B cell (primary cell): ENCODE measurements at regions of chr14 and their contacts with region 1.

Region 1: DNA sequence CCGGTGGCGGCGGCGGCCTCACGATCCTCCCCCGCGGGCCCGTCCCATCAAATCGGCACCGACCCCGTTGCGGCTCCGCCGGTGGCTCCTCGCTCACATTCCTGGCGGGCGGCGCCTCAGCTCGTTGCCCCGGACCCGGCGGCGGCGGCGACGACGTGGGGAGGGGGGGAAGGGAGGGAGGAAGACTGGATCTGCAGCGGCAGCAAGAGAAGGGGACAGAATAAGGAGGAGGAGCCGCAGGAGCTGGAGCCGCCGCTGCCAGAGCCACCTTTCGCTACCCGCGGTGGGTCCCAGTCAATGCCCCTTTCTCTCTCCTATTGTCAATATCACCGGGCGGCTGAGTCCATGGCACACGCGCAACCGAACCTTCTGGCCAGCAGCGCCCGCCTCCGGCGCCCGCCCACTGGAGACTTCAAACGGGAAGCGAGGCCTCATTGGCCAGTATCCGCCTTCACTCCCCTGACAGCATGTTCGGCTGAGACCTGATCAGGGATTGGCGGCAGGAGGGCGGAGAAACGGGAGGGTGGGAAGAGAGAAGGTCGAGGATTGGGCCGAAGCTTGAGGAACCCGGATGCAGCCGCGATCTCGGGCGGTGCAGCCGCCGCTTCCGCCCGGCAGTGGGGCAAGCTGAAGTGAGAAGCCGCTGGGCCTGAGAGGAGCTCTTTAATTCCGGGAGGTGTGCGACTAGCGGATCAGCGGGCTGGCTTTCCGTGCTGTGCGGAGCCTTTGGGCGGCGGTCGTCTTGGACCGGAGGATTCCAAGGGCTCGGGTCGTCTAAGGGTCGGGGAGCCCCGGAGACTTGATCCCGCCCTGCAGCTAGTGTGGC is at the start of gene PPP2R5E:
- DNase-seq: peak; percentile 98
- ATAC-seq: peak; percentile 96
- H3K4me3 ChIP-seq: peak within 1 kb of the TSS; percentile 63 to 98 (median 94)
- H3K4me3 Mint-ChIP-seq: peak within 1 kb of the TSS; percentile 90
- H3K27ac ChIP-seq: peak within 1 kb of the TSS; percentile 82 to 90
- H3K27ac Mint-ChIP-seq: peak within 1 kb of the TSS; percentile 91
- H3K4me1 ChIP-seq: peaks cover 12 to 21% of the 10 kb centered on the region in 2 donors
- H3K4me1 Mint-ChIP-seq: peaks cover 28% of the 10 kb centered on the region
- H3K27me3 ChIP-seq: no peaks in the 10 kb centered on the region
- H3K27me3 Mint-ChIP-seq: no peaks in the 10 kb centered on the region
- CTCF ChIP-seq: no peak
- total RNA-seq, gene PPP2R5E: 40.3 and 40.6 TPM in 2 replicates

Region 2: GRCh38 chr14:63465347-63465746 is 77.9 kb before region 1 on chr14:
- CTCF ChIA-PET with region 1: no interaction called
- POLR2A ChIA-PET with region 1: no interaction called
- intact Hi-C with region 1: no loop called
- DNase-seq: no peak
- ATAC-seq: no peak
- H3K4me3 ChIP-seq: no peak overlapping the region
- H3K4me3 Mint-ChIP-seq: no peak overlapping the region
- H3K27ac ChIP-seq: no peak overlapping the region
- H3K27ac Mint-ChIP-seq: no peak overlapping the region
- H3K4me1 ChIP-seq: no peaks in the 10 kb centered on the region
- H3K4me1 Mint-ChIP-seq: peaks cover 23% of the 10 kb centered on the region
- H3K27me3 ChIP-seq: no peaks in the 10 kb centered on the region
- H3K27me3 Mint-ChIP-seq: no peaks in the 10 kb centered on the region
- CTCF ChIP-seq: no peak

Region 3: GRCh38 chr14:63478010-63478409 is 65.2 kb before region 1 on chr14:
- CTCF ChIA-PET with region 1: interaction called, 3 read pairs
- POLR2A ChIA-PET with region 1: no interaction called
- intact Hi-C with region 1: loop called (anchors 1 kb)
- DNase-seq: peak; percentile 69
- ATAC-seq: peak; percentile 73
- H3K4me3 ChIP-seq: peak overlapping the region in 1 of 5 experiments; percentile 9
- H3K4me3 Mint-ChIP-seq: peak overlapping the region; percentile 31
- H3K27ac ChIP-seq: peak overlapping the region; percentile 50 to 61
- H3K27ac Mint-ChIP-seq: peak overlapping the region; percentile 15
- H3K4me1 ChIP-seq: peaks cover 12 to 15% of the 10 kb centered on the region in 2 donors
- H3K4me1 Mint-ChIP-seq: peaks cover 34% of the 10 kb centered on the region
- H3K27me3 ChIP-seq: no peaks in the 10 kb centered on the region
- H3K27me3 Mint-ChIP-seq: no peaks in the 10 kb centered on the region
- CTCF ChIP-seq: no peak

Region 4: GRCh38 chr14:63672417-63673180 is 129.4 kb after region 1 on chr14:
- CTCF ChIA-PET with region 1: no interaction called
- POLR2A ChIA-PET with region 1: no interaction called
- intact Hi-C with region 1: no loop called
- DNase-seq: no peak
- ATAC-seq: no peak
- H3K4me3 ChIP-seq: no peak overlapping the region
- H3K4me3 Mint-ChIP-seq: no peak overlapping the region
- H3K27ac ChIP-seq: no peak overlapping the region
- H3K27ac Mint-ChIP-seq: no peak overlapping the region
- H3K4me1 ChIP-seq: no peaks in the 10 kb centered on the region
- H3K4me1 Mint-ChIP-seq: no peaks in the 10 kb centered on the region
- H3K27me3 ChIP-seq: no peaks in the 10 kb centered on the region
- H3K27me3 Mint-ChIP-seq: no peaks in the 10 kb centered on the region
- CTCF ChIP-seq: no peak

Region 5: DNA sequence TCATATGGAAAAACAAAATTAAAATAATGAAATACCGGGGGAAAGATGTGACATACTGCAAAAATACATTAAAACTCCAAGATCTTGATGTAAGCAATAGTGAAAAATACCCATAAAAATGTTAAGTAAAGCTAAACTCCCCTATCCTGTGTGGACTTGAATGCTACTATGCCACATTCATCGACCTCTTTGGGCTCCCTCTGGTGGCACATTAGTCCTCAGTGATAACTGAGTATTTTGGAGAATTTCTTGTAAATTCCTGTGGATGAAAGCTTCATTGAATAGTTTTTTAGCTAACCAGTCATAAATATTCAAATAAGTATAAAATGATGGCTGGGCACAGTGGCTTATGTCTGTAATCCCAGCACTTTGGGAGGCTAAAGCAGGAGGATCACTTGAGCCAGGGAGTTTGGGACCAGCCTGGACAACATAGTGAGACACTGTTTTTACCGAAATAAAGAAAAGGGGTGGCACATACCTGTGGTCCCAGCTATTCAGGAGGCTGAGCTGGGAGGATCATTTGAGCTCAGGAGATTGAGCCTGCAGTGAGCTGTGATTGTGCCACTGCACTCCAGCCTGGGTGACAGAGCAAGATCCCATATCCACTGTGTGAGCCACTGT is 227.1 kb after region 1 on chr14:
- CTCF ChIA-PET with region 1: interaction called, 3 read pairs
- POLR2A ChIA-PET with region 1: no interaction called
- intact Hi-C with region 1: loop called (anchors 2 kb)
- DNase-seq: peak; percentile 76
- ATAC-seq: peak; percentile 87
- H3K4me3 ChIP-seq: no peak overlapping the region
- H3K4me3 Mint-ChIP-seq: peak overlapping the region; percentile 32
- H3K27ac ChIP-seq: no peak overlapping the region
- H3K27ac Mint-ChIP-seq: peak overlapping the region; percentile 5
- H3K4me1 ChIP-seq: peaks cover 10 to 22% of the 10 kb centered on the region in 2 donors
- H3K4me1 Mint-ChIP-seq: peaks cover 12% of the 10 kb centered on the region
- H3K27me3 ChIP-seq: no peaks in the 10 kb centered on the region
- H3K27me3 Mint-ChIP-seq: no peaks in the 10 kb centered on the region
- CTCF ChIP-seq: peak; percentile 82

Region 6: GRCh38 chr14:64338616-64339316 is 795.6 kb after region 1 on chr14:
- CTCF ChIA-PET with region 1: no interaction called
- POLR2A ChIA-PET with region 1: interaction called, 7 read pairs
- intact Hi-C with region 1: loop called (anchors 1 kb)
- DNase-seq: peak; percentile 90
- ATAC-seq: peak; percentile 90
- H3K4me3 ChIP-seq: peak overlapping the region; percentile 28 to 90 (median 80)
- H3K4me3 Mint-ChIP-seq: peak overlapping the region; percentile 90
- H3K27ac ChIP-seq: peak overlapping the region; percentile 69 to 82
- H3K27ac Mint-ChIP-seq: peak overlapping the region; percentile 90
- H3K4me1 ChIP-seq: peaks cover 14 to 17% of the 10 kb centered on the region in 2 donors
- H3K4me1 Mint-ChIP-seq: peaks cover 26% of the 10 kb centered on the region
- H3K27me3 ChIP-seq: no peaks in the 10 kb centered on the region
- H3K27me3 Mint-ChIP-seq: no peaks in the 10 kb centered on the region
- CTCF ChIP-seq: no peak

Region 7: GRCh38 chr14:64914237-64914971 is 1371.2 kb after region 1 on chr14 and contains the start of gene CHURC1:
- CTCF ChIA-PET with region 1: no interaction called
- POLR2A ChIA-PET with region 1: no interaction called
- intact Hi-C with region 1: loop called (anchors 10 kb)
- DNase-seq: peak; percentile 98
- ATAC-seq: peak; percentile 97
- H3K4me3 ChIP-seq: peak within 1 kb of the TSS; percentile 88 to 100 (median 96)
- H3K4me3 Mint-ChIP-seq: peak within 1 kb of the TSS; percentile 85
- H3K27ac ChIP-seq: peak within 1 kb of the TSS; percentile 98 to 99
- H3K27ac Mint-ChIP-seq: peak within 1 kb of the TSS; percentile 96
- H3K4me1 ChIP-seq: peaks cover 17 to 24% of the 10 kb centered on the region in 2 donors
- H3K4me1 Mint-ChIP-seq: peaks cover 40% of the 10 kb centered on the region
- H3K27me3 ChIP-seq: peaks cover 0 to 4% (median 0%) of the 10 kb centered on the region in 4 experiments
- H3K27me3 Mint-ChIP-seq: peaks cover 13% of the 10 kb centered on the region
- CTCF ChIP-seq: no peak
- total RNA-seq, gene CHURC1: 67.7 and 77.1 TPM in 2 replicates